Activated naive CD4-positive, alpha-beta T cell treated with anti-CD3 and anti-CD28 coated beads for 36 hours (primary cell): ENCODE measurements at regions of chr19 and their contacts with region 1.

Region 1: GRCh38 chr19:40465557-40466150 is at the start of gene BLVRB:
- DNase-seq: peak; percentile 100
- H3K4me3 Mint-ChIP-seq: peak within 1 kb of the TSS; percentile 78
- H3K27ac Mint-ChIP-seq: peak within 1 kb of the TSS; percentile 50
- H3K4me1 Mint-ChIP-seq: peaks cover 26% of the 10 kb centered on the region
- H3K27me3 Mint-ChIP-seq: peaks cover 10% of the 10 kb centered on the region
- total RNA-seq, gene BLVRB: 29.4 to 30.2 TPM

Region 2: GRCh38 chr19:40348125-40348913 is 117.3 kb before region 1 on chr19 and contains the starts of genes C19orf47 and PLD3:
- CTCF ChIA-PET with region 1: interaction called, 3 read pairs
- intact Hi-C with region 1: loop called (anchors 1 kb)
- DNase-seq: peak; percentile 99
- H3K4me3 Mint-ChIP-seq: peak within 1 kb of the TSS; percentile 89
- H3K27ac Mint-ChIP-seq: peak within 1 kb of the TSS; percentile 78
- H3K4me1 Mint-ChIP-seq: peaks cover 29% of the 10 kb centered on the region
- H3K27me3 Mint-ChIP-seq: no peaks in the 10 kb centered on the region
- total RNA-seq, gene C19orf47: 13.5 to 14.6 TPM
- total RNA-seq, gene PLD3: 57.6 to 58.2 TPM

Region 3: GRCh38 chr19:40452016-40452415 is 13.6 kb before region 1 on chr19:
- CTCF ChIA-PET with region 1: interaction called, 13 read pairs
- intact Hi-C with region 1: no loop called
- DNase-seq: no peak
- H3K4me3 Mint-ChIP-seq: no peak overlapping the region
- H3K27ac Mint-ChIP-seq: no peak overlapping the region
- H3K4me1 Mint-ChIP-seq: no peaks in the 10 kb centered on the region
- H3K27me3 Mint-ChIP-seq: no peaks in the 10 kb centered on the region

Region 4: DNA sequence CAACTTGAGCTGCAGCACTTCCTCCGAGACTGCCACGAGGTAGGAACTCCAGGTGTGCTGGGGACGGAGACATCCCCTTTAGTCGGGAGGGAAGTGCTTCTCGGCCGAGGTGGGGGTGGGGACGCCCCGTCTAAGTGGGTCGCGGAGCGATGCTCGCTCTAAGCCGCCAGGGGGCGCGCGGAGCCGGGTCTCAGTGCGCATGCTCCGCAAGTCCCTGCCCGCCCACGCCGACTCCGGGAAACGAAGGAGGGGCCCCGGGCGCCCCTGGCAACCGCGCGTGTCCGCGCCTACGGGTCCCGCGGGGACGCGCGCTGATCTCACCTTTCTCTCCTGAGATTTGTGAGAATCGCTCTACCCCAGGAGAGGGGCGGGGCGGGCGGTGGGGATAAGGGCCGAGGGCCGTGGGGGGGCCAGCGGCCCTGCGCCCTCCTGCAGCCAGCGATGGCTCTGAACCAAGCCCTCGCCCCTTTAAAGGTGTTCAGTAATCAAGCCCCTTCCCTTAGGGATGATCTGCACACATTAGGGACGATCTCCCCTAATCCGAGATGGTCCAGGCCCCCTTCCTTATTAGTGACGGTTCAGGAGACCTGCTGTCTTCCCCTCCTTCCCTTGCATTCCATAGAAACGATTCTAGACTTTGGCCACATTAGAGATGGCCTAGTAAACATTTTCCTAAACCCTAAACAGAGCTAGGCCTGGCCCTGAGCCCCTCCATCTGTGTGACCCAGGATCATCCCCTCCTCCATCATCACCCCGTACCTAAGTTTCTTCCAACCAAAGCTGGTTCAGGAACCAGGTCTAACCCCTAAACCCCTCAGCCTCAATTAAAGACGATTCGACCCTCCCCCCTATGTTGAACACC is 63.7 kb after region 1 on chr19:
- CTCF ChIA-PET with region 1: interaction called, 6 read pairs
- intact Hi-C with region 1: loop called (anchors 2 kb)
- DNase-seq: peak; percentile 92
- H3K4me3 Mint-ChIP-seq: peak overlapping the region; percentile 43
- H3K27ac Mint-ChIP-seq: no peak overlapping the region
- H3K4me1 Mint-ChIP-seq: peaks cover 10% of the 10 kb centered on the region
- H3K27me3 Mint-ChIP-seq: peaks cover 13% of the 10 kb centered on the region

Region 5: DNA sequence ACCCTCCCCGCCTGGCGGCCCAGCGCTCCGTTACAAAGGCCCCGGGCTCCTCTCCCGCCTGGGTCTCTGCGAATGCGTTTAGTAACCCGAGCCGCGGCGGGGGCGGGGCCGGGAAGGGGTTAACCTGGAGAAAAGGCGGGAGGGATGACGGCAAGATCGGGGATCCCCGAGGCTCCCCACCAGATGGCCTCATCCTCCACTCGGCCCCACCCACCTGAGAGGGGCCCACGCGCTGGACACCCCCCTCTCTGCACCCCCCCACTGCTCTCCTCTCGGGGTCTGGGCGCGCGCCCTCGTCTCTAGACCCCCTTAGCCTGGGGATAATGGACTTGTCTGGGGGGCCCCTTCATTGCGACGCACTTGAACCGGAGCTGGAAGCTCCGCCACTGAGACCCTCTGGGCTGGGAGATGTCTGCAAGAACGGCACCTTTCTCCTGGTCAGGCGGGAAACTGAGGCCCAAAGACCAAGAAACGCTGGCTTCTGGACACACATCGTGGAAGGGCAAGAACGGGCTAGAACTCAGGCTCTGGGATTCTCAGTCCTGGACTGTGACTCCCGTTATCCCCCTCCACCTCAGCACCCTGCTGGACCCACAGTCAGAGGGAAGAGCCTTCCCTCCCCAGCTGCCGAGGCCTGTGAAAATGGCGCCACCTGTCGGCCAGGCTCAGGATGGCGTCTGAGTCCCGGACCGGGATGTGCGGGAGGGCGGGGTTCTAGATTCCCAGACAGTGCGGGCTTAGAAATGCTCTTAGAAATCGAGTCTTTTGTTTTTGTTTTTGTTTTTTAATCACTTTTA is 132.7 kb after region 1 on chr19:
- CTCF ChIA-PET with region 1: interaction called, 3 read pairs
- intact Hi-C with region 1: loop called (anchors 1 kb)
- DNase-seq: peak; percentile 91
- H3K4me3 Mint-ChIP-seq: peak overlapping the region; percentile 12
- H3K27ac Mint-ChIP-seq: no peak overlapping the region
- H3K4me1 Mint-ChIP-seq: peaks cover 50% of the 10 kb centered on the region
- H3K27me3 Mint-ChIP-seq: peaks cover 41% of the 10 kb centered on the region

Region 6: DNA sequence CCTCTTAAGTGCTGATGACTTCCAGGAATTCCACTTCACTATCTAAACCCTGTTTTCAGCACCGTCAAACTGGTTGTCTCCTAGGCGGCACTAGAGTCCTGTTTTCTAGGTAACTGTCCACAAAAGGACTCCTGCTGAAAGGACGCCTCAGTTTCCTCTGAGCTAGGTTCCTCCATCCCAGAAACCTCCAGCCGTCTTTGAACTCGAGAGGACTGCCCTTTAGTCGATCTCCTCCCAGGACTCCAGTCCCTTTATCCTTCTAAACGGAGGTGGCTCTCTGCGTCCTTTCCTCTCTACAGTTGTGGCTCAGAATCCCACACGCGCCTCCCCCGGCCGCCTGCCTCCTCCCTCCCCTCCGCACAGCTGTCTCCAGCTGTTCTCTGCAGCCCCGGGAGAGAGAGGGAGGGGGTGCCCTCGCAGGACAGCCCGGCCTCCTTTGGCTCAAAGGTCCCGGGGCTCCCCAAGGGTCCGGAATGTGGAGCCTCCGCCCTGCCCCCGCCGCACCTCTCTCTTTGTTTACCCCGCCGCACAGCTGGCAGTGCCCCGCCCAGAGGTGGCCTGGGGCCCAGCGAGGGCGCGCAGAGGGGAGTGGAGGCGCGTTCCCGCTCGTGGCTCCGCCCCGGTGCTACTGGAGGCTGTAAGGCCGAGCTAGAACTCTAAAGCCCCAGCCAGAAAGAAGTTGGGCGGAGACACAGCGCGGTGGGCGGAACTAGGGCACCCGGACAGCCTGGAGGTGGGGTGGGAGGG is 137.9 kb after region 1 on chr19:
- CTCF ChIA-PET with region 1: interaction called, 3 read pairs
- intact Hi-C with region 1: loop called (anchors 1 kb)
- DNase-seq: peak; percentile 98
- H3K4me3 Mint-ChIP-seq: peak overlapping the region; percentile 79
- H3K27ac Mint-ChIP-seq: no peak overlapping the region
- H3K4me1 Mint-ChIP-seq: peaks cover 67% of the 10 kb centered on the region
- H3K27me3 Mint-ChIP-seq: peaks cover 28% of the 10 kb centered on the region